ENCODE measurements at regions of chr3 and their contacts with region 1.

Region 1: GRCh38 chr3:58414538-58415197 is 19.0 kb downstream of the PDHB start:
- DNase-seq: peak; percentile 80
- ATAC-seq: peak; percentile 77
- H3K4me3 ChIP-seq: no peak overlapping the region
- H3K4me3 Mint-ChIP-seq: no peak overlapping the region
- H3K27ac ChIP-seq: peak overlapping the region; percentile 27 to 46
- H3K27ac Mint-ChIP-seq: peak overlapping the region; percentile 68
- H3K4me1 ChIP-seq: peaks cover 14 to 18% of the 10 kb centered on the region in 2 donors
- H3K4me1 Mint-ChIP-seq: peaks cover 46% of the 10 kb centered on the region
- H3K27me3 ChIP-seq: no peaks in the 10 kb centered on the region
- H3K27me3 Mint-ChIP-seq: no peaks in the 10 kb centered on the region
- CTCF ChIP-seq: peak; percentile 77

Region 2: GRCh38 chr3:58317811-58318210 is 96.9 kb before region 1 on chr3:
- CTCF ChIA-PET with region 1: interaction called, 37 read pairs
- POLR2A ChIA-PET with region 1: interaction called, 3 read pairs
- intact Hi-C with region 1: loop called (anchors 1 kb)
- DNase-seq: no peak
- ATAC-seq: no peak
- H3K4me3 ChIP-seq: no peak overlapping the region
- H3K4me3 Mint-ChIP-seq: no peak overlapping the region
- H3K27ac ChIP-seq: no peak overlapping the region
- H3K27ac Mint-ChIP-seq: peak overlapping the region; percentile 20
- H3K4me1 ChIP-seq: peaks cover 0 to 8% of the 10 kb centered on the region in 2 donors
- H3K4me1 Mint-ChIP-seq: peaks cover 5% of the 10 kb centered on the region
- H3K27me3 ChIP-seq: no peaks in the 10 kb centered on the region
- H3K27me3 Mint-ChIP-seq: no peaks in the 10 kb centered on the region
- CTCF ChIP-seq: no peak

Region 3: GRCh38 chr3:58324391-58325390 is 90.0 kb before region 1 on chr3:
- CTCF ChIA-PET with region 1: interaction called, 37 read pairs
- POLR2A ChIA-PET with region 1: interaction called, 3 read pairs
- intact Hi-C with region 1: loop called (anchors 1 kb)
- DNase-seq: no peak
- ATAC-seq: peak; percentile 39
- H3K4me3 ChIP-seq: no peak overlapping the region
- H3K4me3 Mint-ChIP-seq: peak overlapping the region; percentile 57
- H3K27ac ChIP-seq: peak overlapping the region in 1 of 2 donors; percentile 62
- H3K27ac Mint-ChIP-seq: peak overlapping the region; percentile 74
- H3K4me1 ChIP-seq: peaks cover 21 to 29% of the 10 kb centered on the region in 2 donors
- H3K4me1 Mint-ChIP-seq: peaks cover 38% of the 10 kb centered on the region
- H3K27me3 ChIP-seq: no peaks in the 10 kb centered on the region
- H3K27me3 Mint-ChIP-seq: no peaks in the 10 kb centered on the region
- CTCF ChIP-seq: no peak

Region 4: GRCh38 chr3:58332575-58333188 is 82.0 kb before region 1 on chr3 and contains the start of gene PXK:
- CTCF ChIA-PET with region 1: interaction called, 81 read pairs
- POLR2A ChIA-PET with region 1: interaction called, 7 read pairs
- intact Hi-C with region 1: loop called (anchors 1 kb)
- DNase-seq: peak; percentile 86
- ATAC-seq: peak; percentile 76
- H3K4me3 ChIP-seq: peak within 1 kb of the TSS; percentile 72 to 90 (median 87)
- H3K4me3 Mint-ChIP-seq: peak within 1 kb of the TSS; percentile 100
- H3K27ac ChIP-seq: peak within 1 kb of the TSS; percentile 9 to 75
- H3K27ac Mint-ChIP-seq: peak within 1 kb of the TSS; percentile 100
- H3K4me1 ChIP-seq: peaks cover 34 to 41% of the 10 kb centered on the region in 2 donors
- H3K4me1 Mint-ChIP-seq: peaks cover 50% of the 10 kb centered on the region
- H3K27me3 ChIP-seq: no peaks in the 10 kb centered on the region
- H3K27me3 Mint-ChIP-seq: no peaks in the 10 kb centered on the region
- CTCF ChIP-seq: no peak
- total RNA-seq, gene PXK: 104 and 109 TPM in 2 replicates

Region 5: GRCh38 chr3:58349792-58350626 is 64.7 kb before region 1 on chr3:
- CTCF ChIA-PET with region 1: interaction called, 24 read pairs
- POLR2A ChIA-PET with region 1: no interaction called
- intact Hi-C with region 1: no loop called
- DNase-seq: peak; percentile 84
- ATAC-seq: peak; percentile 78
- H3K4me3 ChIP-seq: peak overlapping the region; percentile 2 to 58 (median 31)
- H3K4me3 Mint-ChIP-seq: peak overlapping the region; percentile 66
- H3K27ac ChIP-seq: peak overlapping the region; percentile 80 to 97
- H3K27ac Mint-ChIP-seq: peak overlapping the region; percentile 100
- H3K4me1 ChIP-seq: peaks cover 90 to 98% of the 10 kb centered on the region in 2 donors
- H3K4me1 Mint-ChIP-seq: peaks cover 87% of the 10 kb centered on the region
- H3K27me3 ChIP-seq: no peaks in the 10 kb centered on the region
- H3K27me3 Mint-ChIP-seq: no peaks in the 10 kb centered on the region
- CTCF ChIP-seq: no peak

Region 6: GRCh38 chr3:58404396-58404795 is 10.3 kb before region 1 on chr3:
- CTCF ChIA-PET with region 1: interaction called, 30 read pairs
- POLR2A ChIA-PET with region 1: no interaction called
- intact Hi-C with region 1: no loop called
- DNase-seq: no peak
- ATAC-seq: no peak
- H3K4me3 ChIP-seq: no peak overlapping the region
- H3K4me3 Mint-ChIP-seq: no peak overlapping the region
- H3K27ac ChIP-seq: peak overlapping the region in 1 of 2 donors; percentile 54
- H3K27ac Mint-ChIP-seq: peak overlapping the region; percentile 73
- H3K4me1 ChIP-seq: peaks cover 6 to 25% of the 10 kb centered on the region in 2 donors
- H3K4me1 Mint-ChIP-seq: peaks cover 44% of the 10 kb centered on the region
- H3K27me3 ChIP-seq: no peaks in the 10 kb centered on the region
- H3K27me3 Mint-ChIP-seq: no peaks in the 10 kb centered on the region
- CTCF ChIP-seq: no peak

Region 7: GRCh38 chr3:58532794-58533220 is 118.1 kb after region 1 on chr3:
- CTCF ChIA-PET with region 1: interaction called, 5 read pairs
- POLR2A ChIA-PET with region 1: no interaction called
- intact Hi-C with region 1: loop called (anchors 1 kb)
- DNase-seq: peak; percentile 89
- ATAC-seq: peak; percentile 99
- H3K4me3 ChIP-seq: no peak overlapping the region
- H3K4me3 Mint-ChIP-seq: no peak overlapping the region
- H3K27ac ChIP-seq: no peak overlapping the region
- H3K27ac Mint-ChIP-seq: peak overlapping the region; percentile 7
- H3K4me1 ChIP-seq: peaks cover 6 to 8% of the 10 kb centered on the region in 2 donors
- H3K4me1 Mint-ChIP-seq: peaks cover 6% of the 10 kb centered on the region
- H3K27me3 ChIP-seq: no peaks in the 10 kb centered on the region
- H3K27me3 Mint-ChIP-seq: no peaks in the 10 kb centered on the region
- CTCF ChIP-seq: peak; percentile 91

Region 8: DNA sequence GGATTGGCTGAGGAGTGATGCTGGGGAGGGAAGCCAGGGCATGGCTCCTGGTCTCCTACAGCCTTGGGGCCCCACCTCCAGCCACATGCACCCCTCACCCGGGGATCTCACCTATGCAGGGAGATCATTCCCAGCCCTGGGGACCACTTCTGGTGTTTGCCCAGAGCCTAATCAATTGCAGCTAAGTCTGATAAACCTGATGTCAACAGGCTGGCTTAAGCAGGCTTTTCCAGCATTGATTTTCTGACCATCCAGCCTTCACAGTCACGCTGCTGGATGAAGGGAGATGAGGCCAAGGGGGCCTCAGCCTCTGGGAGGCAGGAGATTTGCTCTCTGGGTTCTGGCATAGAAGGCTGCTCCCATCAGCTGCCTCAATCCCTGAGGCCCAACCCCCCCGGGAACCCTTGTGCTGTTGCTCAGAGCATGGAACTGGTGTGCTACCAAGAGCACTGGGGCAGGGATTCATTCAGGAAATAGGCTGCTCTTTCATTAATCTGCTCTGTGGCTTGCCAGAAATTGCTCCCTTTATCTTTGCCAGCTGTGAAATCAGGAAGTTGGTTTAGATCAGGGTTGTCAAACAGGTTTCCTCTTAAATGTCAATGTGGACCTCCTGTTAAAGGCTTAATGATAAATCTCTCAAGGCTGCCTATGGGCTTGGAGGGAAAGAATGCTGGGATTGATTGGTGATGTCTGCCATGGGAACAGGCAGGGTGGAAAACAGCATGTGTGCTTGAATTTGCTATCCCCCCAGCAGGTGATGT is 232.9 kb after region 1 on chr3:
- CTCF ChIA-PET with region 1: no interaction called
- POLR2A ChIA-PET with region 1: no interaction called
- intact Hi-C with region 1: no loop called
- DNase-seq: no peak
- ATAC-seq: no peak
- H3K4me3 ChIP-seq: no peak overlapping the region
- H3K4me3 Mint-ChIP-seq: no peak overlapping the region
- H3K27ac ChIP-seq: no peak overlapping the region
- H3K27ac Mint-ChIP-seq: no peak overlapping the region
- H3K4me1 ChIP-seq: no peaks in the 10 kb centered on the region
- H3K4me1 Mint-ChIP-seq: no peaks in the 10 kb centered on the region
- H3K27me3 ChIP-seq: no peaks in the 10 kb centered on the region
- H3K27me3 Mint-ChIP-seq: peaks cover 4% of the 10 kb centered on the region
- CTCF ChIP-seq: no peak

Measured in B cell (primary cell).